Activated B cell treated with CpG ODN at 0.5 μM for 24 hours (primary cell): ENCODE measurements at regions of chr9 and their contacts with region 1.

Region 1: GRCh38 chr9:136283291-136284235 is 20.3 kb downstream of the CCDC187 start:
- DNase-seq: peak; percentile 79
- ATAC-seq: peak; percentile 86
- H3K4me3 Mint-ChIP-seq: peak overlapping the region; percentile 79
- H3K27ac Mint-ChIP-seq: peak overlapping the region; percentile 65
- H3K4me1 Mint-ChIP-seq: peaks cover 21% of the 10 kb centered on the region
- H3K27me3 Mint-ChIP-seq: peaks cover 11% of the 10 kb centered on the region
- CTCF ChIP-seq: no peak

Region 2: DNA sequence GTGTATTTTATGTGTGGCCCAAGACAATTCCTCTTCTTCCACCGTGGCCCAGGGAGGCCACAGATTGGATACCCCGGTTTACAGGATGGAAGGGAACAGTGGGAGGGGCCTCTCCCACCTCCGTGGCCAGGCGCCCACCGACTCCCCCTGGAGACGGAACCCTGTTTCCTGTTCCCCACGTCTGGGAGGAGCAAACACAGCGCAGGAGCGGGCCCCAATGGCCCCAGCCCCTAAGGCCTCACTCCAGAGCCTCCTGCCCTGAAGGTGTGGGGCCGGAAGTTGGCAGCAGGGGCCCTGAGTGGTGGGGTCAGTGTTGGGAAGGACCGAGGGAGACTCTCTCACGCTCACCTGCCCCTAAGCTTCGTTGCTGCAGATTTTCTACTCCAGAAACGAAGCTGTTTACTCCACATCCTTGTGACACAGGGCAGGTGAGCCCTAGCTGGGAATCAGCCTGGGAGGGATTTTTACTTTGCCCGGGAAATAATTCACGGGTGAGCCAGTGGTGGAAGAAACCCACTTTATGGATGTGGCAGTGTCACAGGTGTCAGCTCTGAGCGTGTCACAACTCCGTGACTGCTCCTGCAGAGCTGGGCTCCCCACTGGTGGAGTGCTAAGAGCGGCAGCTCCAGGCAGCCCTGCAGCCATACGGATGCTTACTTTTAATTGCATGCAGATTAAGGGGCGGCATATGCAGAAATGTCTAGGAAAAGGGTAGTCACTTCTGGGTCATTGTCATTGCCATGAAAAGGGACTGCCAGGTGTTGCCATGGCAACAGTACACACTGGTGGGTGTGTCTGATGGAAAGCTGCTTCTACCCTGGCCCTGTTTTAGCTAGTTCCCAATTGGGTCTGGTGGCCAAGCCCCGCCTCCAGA is 1273.6 kb before region 1 on chr9:
- CTCF ChIA-PET with region 1: no interaction called
- POLR2A ChIA-PET with region 1: no interaction called
- intact Hi-C with region 1: no loop called
- DNase-seq: no peak
- ATAC-seq: no peak
- H3K4me3 Mint-ChIP-seq: no peak overlapping the region
- H3K27ac Mint-ChIP-seq: no peak overlapping the region
- H3K4me1 Mint-ChIP-seq: no peaks in the 10 kb centered on the region
- H3K27me3 Mint-ChIP-seq: peaks cover 3% of the 10 kb centered on the region
- CTCF ChIP-seq: no peak

Region 3: GRCh38 chr9:135971892-135972291 is 311.7 kb before region 1 on chr9:
- CTCF ChIA-PET with region 1: no interaction called
- POLR2A ChIA-PET with region 1: no interaction called
- intact Hi-C with region 1: loop called (anchors 1 kb)
- DNase-seq: no peak
- ATAC-seq: peak; percentile 36
- H3K4me3 Mint-ChIP-seq: no peak overlapping the region
- H3K27ac Mint-ChIP-seq: no peak overlapping the region
- H3K4me1 Mint-ChIP-seq: peaks cover 7% of the 10 kb centered on the region
- H3K27me3 Mint-ChIP-seq: peaks cover 29% of the 10 kb centered on the region
- CTCF ChIP-seq: no peak

Region 4: GRCh38 chr9:136133191-136133958 is 150.2 kb before region 1 on chr9:
- CTCF ChIA-PET with region 1: interaction called, 7 read pairs
- POLR2A ChIA-PET with region 1: no interaction called
- intact Hi-C with region 1: loop called (anchors 1 kb)
- DNase-seq: peak; percentile 45
- ATAC-seq: peak; percentile 81
- H3K4me3 Mint-ChIP-seq: peak overlapping the region; percentile 28
- H3K27ac Mint-ChIP-seq: no peak overlapping the region
- H3K4me1 Mint-ChIP-seq: peaks cover 9% of the 10 kb centered on the region
- H3K27me3 Mint-ChIP-seq: peaks cover 29% of the 10 kb centered on the region
- CTCF ChIP-seq: no peak

Region 5: DNA sequence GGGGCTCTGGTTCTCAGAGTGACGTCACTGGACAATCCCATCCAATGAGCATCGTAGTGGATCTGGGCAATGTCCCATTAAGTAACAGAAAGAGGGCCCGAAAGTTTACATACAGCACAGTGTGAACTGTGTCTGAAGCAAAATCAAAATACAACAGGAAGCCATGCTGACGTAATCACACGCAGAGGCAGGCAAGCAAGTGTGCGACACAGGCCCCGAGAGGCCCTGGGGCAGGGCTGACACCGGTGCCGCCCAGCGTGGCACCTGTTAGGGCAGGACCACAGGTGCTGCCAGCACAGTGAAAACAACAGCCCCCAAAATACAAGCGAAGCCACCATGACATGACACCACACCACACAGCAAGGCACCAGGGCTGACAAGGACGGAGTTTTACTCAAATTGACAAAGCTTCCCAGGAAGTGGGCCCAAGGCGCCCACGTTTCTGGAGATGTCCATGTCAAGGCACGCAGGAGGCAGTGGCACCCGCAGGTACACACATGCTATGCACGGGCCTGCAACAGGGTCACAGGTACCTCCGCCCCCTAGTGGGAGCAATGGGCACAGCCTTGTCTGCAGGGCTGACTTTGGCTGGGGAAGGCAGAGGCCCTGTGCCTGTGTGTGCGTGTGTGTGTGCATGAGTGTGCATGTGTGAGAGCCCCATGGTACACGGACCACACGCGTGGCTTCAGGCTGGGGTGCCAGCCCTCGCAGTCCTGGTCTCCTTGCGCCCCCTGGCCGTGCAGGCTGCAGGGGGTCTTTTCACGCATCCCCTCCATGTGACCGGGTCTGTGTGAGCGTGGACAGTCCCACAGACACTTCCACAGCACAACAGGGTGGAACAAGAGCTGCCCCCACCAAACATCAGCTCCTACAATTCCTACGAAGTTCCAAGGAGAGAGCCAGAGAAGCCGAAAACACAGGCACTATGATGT is 57.5 kb before region 1 on chr9:
- CTCF ChIA-PET with region 1: interaction called, 15 read pairs
- POLR2A ChIA-PET with region 1: interaction called, 9 read pairs
- intact Hi-C with region 1: loop called (anchors 1 kb)
- DNase-seq: peak; percentile 70
- ATAC-seq: peak; percentile 78
- H3K4me3 Mint-ChIP-seq: peak overlapping the region; percentile 79
- H3K27ac Mint-ChIP-seq: peak overlapping the region; percentile 98
- H3K4me1 Mint-ChIP-seq: peaks cover 80% of the 10 kb centered on the region
- H3K27me3 Mint-ChIP-seq: no peaks in the 10 kb centered on the region
- CTCF ChIP-seq: peak; percentile 30

Region 6: GRCh38 chr9:136267261-136268111 is 16.1 kb before region 1 on chr9:
- CTCF ChIA-PET with region 1: interaction called, 12 read pairs
- POLR2A ChIA-PET with region 1: interaction called, 5 read pairs
- intact Hi-C with region 1: loop called (anchors 1 kb)
- DNase-seq: peak; percentile 72
- ATAC-seq: peak; percentile 97
- H3K4me3 Mint-ChIP-seq: peak overlapping the region; percentile 80
- H3K27ac Mint-ChIP-seq: peak overlapping the region; percentile 70
- H3K4me1 Mint-ChIP-seq: peaks cover 11% of the 10 kb centered on the region
- H3K27me3 Mint-ChIP-seq: no peaks in the 10 kb centered on the region
- CTCF ChIP-seq: no peak